ENCODE measurements at regions of chr1 and their contacts with region 1.

Region 1: DNA sequence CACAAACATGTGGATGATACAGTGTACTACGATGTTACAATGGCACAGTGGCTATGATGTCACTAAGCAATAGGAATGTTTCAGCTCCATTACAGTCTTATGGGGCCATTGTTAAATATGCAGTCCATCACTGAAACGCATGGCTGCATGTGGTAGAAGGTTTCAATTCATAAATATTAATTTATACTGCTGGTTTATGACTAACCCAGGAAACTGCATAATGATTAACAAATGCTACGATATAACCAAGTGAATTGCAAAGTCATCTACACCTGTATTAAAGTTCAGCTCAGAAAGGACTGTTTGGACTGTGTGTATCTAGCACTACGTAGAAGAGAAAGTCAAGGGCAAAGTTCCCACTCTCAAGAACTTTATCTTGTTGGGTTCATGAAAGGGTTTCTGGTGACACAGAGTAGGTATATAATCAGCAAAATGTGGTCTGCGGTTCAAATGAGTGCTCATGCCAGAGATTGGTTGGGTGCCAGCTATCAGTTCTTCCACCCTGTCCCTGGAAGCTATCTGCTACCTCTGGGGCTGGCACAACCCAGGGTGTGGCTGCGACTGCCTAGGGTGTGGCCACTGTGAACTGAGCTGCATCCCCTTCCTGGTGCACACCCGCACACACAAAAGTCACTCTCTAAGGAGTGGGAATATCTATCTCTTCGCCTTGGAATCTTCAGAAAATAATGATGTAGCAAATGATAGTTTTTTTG is 14.8 kb downstream of the MGST3 start:
- DNase-seq: no peak

Region 2: GRCh38 chr1:165527251-165528007 is 118.4 kb before region 1 on chr1:
- intact Hi-C with region 1: no loop called
- DNase-seq: no peak

Region 3: DNA sequence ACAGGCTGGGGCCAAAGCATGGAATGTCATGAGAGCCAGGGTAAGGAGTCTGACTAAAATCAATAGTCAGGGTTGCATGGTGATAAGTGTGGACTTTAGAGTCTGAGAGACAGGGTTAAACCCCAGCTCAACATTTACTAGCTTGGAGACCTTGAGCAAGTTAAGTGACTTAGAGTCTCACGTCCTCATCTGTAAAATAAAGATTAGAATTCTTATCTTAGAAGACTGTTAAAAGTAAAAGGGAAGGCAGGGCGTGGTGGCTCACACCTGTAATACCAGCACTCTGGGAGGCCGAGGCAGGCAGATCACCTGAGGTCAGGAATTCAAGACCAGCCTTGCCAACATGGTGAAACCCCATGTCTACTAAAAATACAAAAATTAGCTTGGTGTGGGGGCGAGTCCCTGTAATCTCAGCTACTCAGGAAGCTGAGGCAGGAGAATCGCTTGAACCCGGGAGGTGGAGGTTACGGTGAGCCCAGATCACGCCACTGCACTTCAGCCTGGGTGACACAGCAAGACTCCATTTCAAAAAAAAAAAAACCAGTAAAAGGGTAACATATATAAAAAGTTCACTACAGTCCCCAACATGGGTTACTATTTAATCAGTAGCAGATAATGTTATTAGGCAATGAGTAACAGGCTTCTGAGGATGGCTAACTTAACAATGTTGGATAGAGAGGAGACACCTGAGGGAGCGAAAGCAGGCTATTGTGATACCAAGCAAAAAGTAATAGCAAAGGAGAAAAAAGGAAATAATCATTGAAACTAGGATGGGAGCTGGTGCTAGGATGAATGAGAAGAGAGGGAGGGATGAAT is 102.0 kb after region 1 on chr1:
- intact Hi-C with region 1: loop called in 1 of 2 experiments (anchors 10 kb)
- DNase-seq: no peak

Region 4: DNA sequence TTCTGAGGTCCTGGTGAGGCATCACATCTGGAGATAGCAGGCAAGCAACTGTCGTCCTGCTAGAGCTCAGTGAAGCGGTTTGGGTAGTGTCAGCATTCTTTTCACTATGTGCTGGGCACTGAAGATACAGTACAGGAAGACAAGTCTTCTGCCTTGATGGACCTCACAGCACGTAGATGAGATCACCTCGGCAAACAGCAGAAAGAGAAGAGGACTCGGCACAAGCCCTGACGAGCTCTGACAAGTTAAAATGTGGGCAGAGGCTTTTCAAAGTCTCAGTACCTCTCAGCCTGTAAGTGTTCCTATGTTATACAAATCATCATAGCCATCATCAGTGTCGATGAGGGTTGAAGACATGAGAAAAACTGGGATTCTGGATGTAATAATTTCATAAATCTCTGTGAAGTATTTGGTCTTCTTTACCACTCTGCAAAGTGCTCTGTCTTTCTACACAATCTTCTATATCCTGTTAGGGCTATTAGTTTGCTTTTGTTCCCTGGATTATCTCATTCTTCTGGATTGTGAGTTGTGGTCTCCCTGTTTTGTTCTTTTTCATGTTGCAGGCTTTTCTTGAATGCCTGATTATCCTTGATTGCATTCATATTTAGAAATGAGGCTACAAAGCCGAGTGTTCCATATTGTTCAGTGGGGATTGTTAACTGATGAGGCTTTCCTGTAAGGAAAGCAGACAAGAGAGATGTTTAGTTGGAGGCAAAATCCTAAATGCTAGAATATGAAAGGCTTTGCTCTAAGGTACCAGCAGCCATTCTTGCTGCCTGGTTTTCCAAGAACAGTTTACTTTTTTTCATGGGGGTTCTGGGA is 1367.5 kb after region 1 on chr1:
- intact Hi-C with region 1: loop called in 1 of 2 experiments (anchors 5 kb)
- DNase-seq: no peak